ENCODE measurements at regions of chr5 and their contacts with region 1.

Region 1: DNA sequence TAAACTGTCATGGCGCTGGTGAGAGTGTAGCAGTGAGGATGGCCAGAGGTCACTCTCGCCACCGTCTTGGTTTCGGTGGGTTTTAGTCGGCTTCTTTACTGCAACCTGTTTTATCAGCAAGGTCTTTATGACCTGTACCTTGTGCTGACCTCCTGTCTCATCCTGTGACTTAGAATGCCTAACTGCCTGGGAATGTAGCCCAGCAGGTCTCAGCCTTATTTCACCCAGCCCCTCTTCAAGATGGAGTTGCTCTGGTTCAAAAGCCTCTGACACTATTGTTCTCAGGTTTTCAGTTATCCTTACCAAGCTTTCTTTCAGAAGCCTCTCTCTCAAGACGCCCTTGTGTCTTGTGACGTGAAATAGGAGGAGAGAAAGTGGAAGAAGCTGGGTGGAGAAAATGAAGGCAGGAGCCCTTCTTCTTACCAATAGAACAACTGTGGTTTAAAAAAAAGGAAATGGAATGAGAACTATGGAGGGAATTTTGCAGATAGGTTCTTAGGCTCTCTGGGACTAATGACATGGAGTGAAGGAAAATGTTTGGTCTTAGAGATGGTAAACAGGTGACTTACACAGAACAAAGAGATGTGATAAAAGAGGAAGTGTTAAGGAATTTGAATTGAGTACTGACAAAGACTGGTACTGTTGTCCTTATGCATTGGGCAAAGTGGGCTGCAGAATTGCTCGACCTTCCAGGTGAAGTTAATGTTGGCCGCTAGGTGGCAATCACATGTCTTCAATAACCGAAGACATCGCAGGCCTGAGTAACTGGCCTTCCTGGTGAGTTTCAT is 133.3 kb upstream of the RAI14 start:
- DNase-seq: no peak
- H3K4me3 ChIP-seq: no peak overlapping the region
- H3K27ac ChIP-seq: peak overlapping the region; percentile 84
- H3K4me1 ChIP-seq: peaks cover 42% of the 10 kb centered on the region
- H3K27me3 ChIP-seq: no peaks in the 10 kb centered on the region
- CTCF ChIP-seq: peak; percentile 65
- POLR2A ChIP-seq: no peak

Region 2: GRCh38 chr5:32975656-32976375 is 1547.0 kb before region 1 on chr5:
- CTCF ChIA-PET with region 1: no interaction called
- POLR2A ChIA-PET with region 1: no interaction called
- dilution Hi-C with region 1: no loop called
- intact Hi-C with region 1: no loop called
- DNase-seq: no peak
- H3K4me3 ChIP-seq: no peak overlapping the region
- H3K27ac ChIP-seq: no peak overlapping the region
- H3K4me1 ChIP-seq: no peaks in the 10 kb centered on the region
- H3K27me3 ChIP-seq: peaks cover 0 to 1% of the 10 kb centered on the region in 2 experiments
- CTCF ChIP-seq: no peak
- POLR2A ChIP-seq: no peak

Region 3: GRCh38 chr5:34533582-34534522 is 11.1 kb after region 1 on chr5:
- CTCF ChIA-PET with region 1: interaction called, 8 read pairs
- POLR2A ChIA-PET with region 1: no interaction called
- dilution Hi-C with region 1: no loop called
- intact Hi-C with region 1: loop called (anchors 1 kb)
- DNase-seq: peak; percentile 39
- H3K4me3 ChIP-seq: no peak overlapping the region
- H3K27ac ChIP-seq: no peak overlapping the region
- H3K4me1 ChIP-seq: peaks cover 11% of the 10 kb centered on the region
- H3K27me3 ChIP-seq: no peaks in the 10 kb centered on the region
- CTCF ChIP-seq: no peak
- POLR2A ChIP-seq: no peak

Region 4: GRCh38 chr5:34626036-34626754 is 103.4 kb after region 1 on chr5:
- CTCF ChIA-PET with region 1: interaction called, 10 read pairs
- POLR2A ChIA-PET with region 1: no interaction called
- dilution Hi-C with region 1: no loop called
- intact Hi-C with region 1: loop called (anchors 1 kb)
- DNase-seq: peak; percentile 88
- H3K4me3 ChIP-seq: no peak overlapping the region
- H3K27ac ChIP-seq: peak overlapping the region; percentile 78
- H3K4me1 ChIP-seq: peaks cover 44% of the 10 kb centered on the region
- H3K27me3 ChIP-seq: no peaks in the 10 kb centered on the region
- CTCF ChIP-seq: no peak
- POLR2A ChIP-seq: no peak

Region 5: DNA sequence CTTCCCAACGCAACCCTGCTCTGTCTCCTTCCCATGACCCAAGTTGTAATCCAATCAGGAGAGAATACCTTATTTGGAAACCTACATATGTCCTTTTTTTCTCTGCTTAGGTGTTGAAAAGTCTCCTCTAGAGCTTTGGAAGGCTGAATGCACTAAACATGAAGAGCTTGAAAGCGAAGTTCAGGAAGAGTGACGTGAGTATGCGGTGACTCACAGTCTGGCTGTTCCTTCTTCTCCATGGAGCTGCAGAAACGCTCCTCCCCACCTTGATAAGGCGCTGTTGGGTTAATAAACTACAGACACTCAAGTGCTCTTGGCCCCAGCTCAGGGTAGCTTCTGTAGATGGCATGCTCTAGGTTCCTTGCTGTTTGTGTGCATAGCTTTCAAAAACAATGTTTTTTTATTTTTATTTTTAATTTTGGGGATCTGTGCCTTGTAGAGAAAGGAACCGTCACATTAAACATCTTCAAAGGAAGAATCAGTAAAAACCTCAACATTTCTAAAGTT is 164.0 kb after region 1 on chr5:
- CTCF ChIA-PET with region 1: interaction called, 25 read pairs
- POLR2A ChIA-PET with region 1: interaction called, 3 read pairs
- dilution Hi-C with region 1: no loop called
- intact Hi-C with region 1: loop called (anchors 1 kb)
- DNase-seq: peak; percentile 97
- H3K4me3 ChIP-seq: peak overlapping the region in 1 of 3 experiments; percentile 12
- H3K27ac ChIP-seq: peak overlapping the region; percentile 80
- H3K4me1 ChIP-seq: peaks cover 63% of the 10 kb centered on the region
- H3K27me3 ChIP-seq: no peaks in the 10 kb centered on the region
- CTCF ChIP-seq: peak in 1 of 2 donors; percentile 6
- POLR2A ChIP-seq: no peak

Region 6: GRCh38 chr5:34717426-34718327 is 194.9 kb after region 1 on chr5:
- CTCF ChIA-PET with region 1: interaction called, 4 read pairs
- POLR2A ChIA-PET with region 1: no interaction called
- dilution Hi-C with region 1: no loop called
- intact Hi-C with region 1: loop called (anchors 1 kb)
- DNase-seq: peak; percentile 96
- H3K4me3 ChIP-seq: peak overlapping the region in 1 of 3 experiments; percentile 25
- H3K27ac ChIP-seq: peak overlapping the region; percentile 96
- H3K4me1 ChIP-seq: peaks cover 70% of the 10 kb centered on the region
- H3K27me3 ChIP-seq: no peaks in the 10 kb centered on the region
- CTCF ChIP-seq: no peak
- POLR2A ChIP-seq: peak; percentile 18

Region 7: DNA sequence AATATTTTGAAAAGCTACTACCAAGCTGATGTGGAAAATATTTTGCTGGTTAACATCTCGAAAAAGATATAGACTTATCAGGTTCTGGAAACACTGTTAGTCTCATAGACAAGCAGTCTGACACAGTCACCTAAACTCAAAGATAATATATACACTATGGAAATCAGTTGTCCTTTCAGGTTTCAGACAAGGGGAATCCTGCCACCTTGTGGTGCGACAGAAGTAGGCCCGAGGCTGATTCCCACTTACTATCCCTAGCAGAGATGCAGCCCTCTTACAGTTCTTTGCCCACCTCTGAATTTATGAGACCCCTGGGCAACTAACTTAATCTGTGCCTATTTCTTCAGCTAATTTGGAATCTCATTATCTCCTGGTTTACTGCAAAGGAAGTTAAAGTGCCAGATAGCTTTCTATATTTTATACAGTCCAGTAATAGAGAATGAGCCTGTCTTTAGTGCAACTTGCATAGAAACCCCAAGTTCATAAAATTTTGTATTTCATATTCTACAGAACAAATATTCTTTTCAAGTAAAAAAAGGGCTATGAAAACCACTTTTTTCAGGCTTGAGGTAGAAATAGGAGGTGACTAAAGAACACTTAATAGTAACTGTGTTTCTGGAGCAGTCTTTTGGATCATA is 375.6 kb after region 1 on chr5:
- CTCF ChIA-PET with region 1: interaction called, 7 read pairs
- POLR2A ChIA-PET with region 1: interaction called, 3 read pairs
- dilution Hi-C with region 1: no loop called
- intact Hi-C with region 1: loop called (anchors 1 kb)
- DNase-seq: peak; percentile 74
- H3K4me3 ChIP-seq: no peak overlapping the region
- H3K27ac ChIP-seq: no peak overlapping the region
- H3K4me1 ChIP-seq: no peaks in the 10 kb centered on the region
- H3K27me3 ChIP-seq: no peaks in the 10 kb centered on the region
- CTCF ChIP-seq: peak; percentile 83 to 84
- POLR2A ChIP-seq: no peak

Measured in endothelial cell of umbilical vein (primary cell).